ENCODE measurements at regions of chr4 and their contacts with region 1.

Region 1: DNA sequence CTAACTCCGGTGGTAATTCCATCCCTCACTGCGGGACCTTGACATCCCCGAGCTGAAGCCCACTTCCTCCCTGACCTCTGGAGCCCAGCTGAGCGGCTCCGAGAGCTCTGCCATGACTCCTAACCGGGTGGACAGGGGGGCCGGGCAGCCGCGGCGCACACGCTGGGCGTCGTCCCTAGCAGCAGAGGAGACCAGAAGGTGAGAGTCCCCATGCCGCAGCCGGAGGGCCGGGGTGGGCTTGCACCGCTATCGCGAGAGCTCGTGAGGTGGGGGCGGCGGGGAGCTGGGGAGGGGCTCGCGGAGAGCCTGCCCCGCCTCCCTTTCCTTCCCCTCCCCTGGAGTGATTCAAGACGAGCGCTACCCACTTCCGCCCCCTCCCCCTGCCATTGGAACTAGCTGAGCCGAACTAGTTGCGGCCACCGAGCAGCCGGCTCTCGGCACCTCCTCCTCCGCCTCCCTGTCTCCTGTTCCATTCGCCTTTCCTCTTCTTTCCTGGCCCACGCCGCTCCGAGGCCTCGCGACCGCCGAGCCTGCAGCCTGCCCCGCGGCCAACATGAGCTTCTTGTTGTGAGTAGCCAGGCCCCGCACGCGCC is at the start of gene MOB1B:
- DNase-seq: peak; percentile 97
- H3K4me3 ChIP-seq: peak within 1 kb of the TSS; percentile 77 to 99
- H3K27ac ChIP-seq: peak within 1 kb of the TSS; percentile 77 to 88
- H3K4me1 ChIP-seq: peaks cover 0 to 2% of the 10 kb centered on the region in 2 experiments; a peak in 3 of 4 replicates
- H3K27me3 ChIP-seq: no peaks in the 10 kb centered on the region
- CTCF ChIP-seq: peak; percentile 36
- EP300 ChIP-seq: no peak
- RAD21 ChIP-seq: no peak
- polyA plus RNA-seq, gene MOB1B: 2.9 and 4.6 TPM in 2 replicates

Region 2: DNA sequence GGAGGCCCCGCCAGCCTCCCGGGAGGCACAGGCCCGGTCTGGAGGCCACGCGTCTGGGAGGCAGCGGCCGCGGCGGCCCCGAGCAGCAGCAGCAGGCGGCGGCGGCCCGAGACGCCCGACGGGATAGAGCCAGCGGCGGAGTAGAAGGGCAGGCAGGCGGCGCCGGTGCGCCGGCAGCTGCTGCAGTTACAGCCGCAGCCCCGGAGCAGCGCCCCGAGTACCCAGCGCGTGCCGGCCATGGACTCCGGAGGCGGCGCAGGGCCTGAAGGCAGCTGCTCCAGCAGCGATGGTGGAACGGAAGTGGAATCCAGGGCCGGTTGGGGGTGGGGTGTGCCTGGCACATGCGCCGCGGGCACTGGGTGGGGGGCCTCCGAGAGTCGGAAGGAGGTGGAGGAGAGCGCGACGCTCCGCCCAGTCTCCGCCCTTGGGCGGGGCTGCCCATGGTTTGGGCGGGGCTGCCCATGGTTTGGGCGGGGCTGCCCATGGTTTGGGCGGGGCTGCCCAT is 62.4 kb before region 1 on chr4 and contains the start of gene GRSF1:
- CTCF ChIA-PET with region 1: interaction called, 3 read pairs
- POLR2A ChIA-PET with region 1: interaction called, 11 read pairs
- DNase-seq: peak; percentile 97
- H3K4me3 ChIP-seq: peak within 1 kb of the TSS; percentile 81 to 87
- H3K27ac ChIP-seq: peak within 1 kb of the TSS; percentile 79 to 87
- H3K4me1 ChIP-seq: peaks cover 0 to 4% of the 10 kb centered on the region in 2 experiments; a peak in 2 of 4 replicates
- H3K27me3 ChIP-seq: no peaks in the 10 kb centered on the region
- CTCF ChIP-seq: no peak
- EP300 ChIP-seq: no peak
- RAD21 ChIP-seq: no peak
- polyA plus RNA-seq, gene GRSF1: 44.2 and 63.7 TPM in 2 replicates

Measured in SK-N-SH (cell line).